Naive thymus-derived CD4-positive, alpha-beta T cell (primary cell): ENCODE measurements at regions of chr22 and their contacts with region 1.

Region 1: DNA sequence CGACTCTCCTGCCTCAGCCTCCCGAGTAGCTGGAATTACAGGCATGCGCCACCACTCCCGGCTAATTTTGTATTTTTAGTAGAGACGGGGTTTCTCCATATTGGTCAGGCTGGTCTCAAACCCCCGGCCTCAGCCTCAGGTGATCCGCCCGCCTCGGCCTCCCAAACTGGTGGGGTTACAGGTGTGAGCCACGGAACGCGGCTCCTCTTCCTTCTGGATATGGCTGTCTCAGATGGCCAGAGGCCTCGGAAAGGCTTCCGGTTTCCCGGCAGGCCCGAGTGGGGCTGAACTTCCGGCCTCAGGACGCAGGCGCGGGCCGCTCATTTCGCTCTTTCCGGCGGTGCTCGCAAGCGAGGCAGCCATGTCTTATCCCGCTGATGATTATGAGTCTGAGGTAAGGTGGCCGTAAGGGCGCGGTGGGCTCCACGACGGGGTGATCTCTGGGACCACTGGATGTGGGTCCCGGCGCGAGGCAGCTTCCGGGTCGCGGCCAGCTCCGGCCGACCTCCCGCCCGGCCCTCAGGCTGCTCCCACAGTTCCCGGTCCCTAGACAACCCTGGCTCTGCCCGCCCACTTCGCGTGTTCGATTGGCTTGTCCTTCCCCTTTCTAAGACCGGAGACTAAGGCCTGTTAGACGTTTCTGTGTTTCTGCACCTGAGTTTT is at the start of gene EIF3L:
- DNase-seq: peak; percentile 79 to 90 (median 84)
- ATAC-seq: peak; percentile 79
- H3K4me3 ChIP-seq: peak within 1 kb of the TSS; percentile 77
- H3K4me3 Mint-ChIP-seq: peak within 1 kb of the TSS; percentile 91 to 99 (median 95)
- H3K27ac ChIP-seq: peak within 1 kb of the TSS; percentile 79
- H3K27ac Mint-ChIP-seq: peak within 1 kb of the TSS; percentile 89 to 100 (median 98)
- H3K4me1 ChIP-seq: peaks cover 21 to 26% of the 10 kb centered on the region in 2 donors
- H3K4me1 Mint-ChIP-seq: peaks cover 26 to 60% (median 50%) of the 10 kb centered on the region in 7 donors
- H3K27me3 ChIP-seq: no peaks in the 10 kb centered on the region
- H3K27me3 Mint-ChIP-seq: no peaks in the 10 kb centered on the region
- total RNA-seq, gene EIF3L: 383 to 586 (median 525) TPM

Region 2: DNA sequence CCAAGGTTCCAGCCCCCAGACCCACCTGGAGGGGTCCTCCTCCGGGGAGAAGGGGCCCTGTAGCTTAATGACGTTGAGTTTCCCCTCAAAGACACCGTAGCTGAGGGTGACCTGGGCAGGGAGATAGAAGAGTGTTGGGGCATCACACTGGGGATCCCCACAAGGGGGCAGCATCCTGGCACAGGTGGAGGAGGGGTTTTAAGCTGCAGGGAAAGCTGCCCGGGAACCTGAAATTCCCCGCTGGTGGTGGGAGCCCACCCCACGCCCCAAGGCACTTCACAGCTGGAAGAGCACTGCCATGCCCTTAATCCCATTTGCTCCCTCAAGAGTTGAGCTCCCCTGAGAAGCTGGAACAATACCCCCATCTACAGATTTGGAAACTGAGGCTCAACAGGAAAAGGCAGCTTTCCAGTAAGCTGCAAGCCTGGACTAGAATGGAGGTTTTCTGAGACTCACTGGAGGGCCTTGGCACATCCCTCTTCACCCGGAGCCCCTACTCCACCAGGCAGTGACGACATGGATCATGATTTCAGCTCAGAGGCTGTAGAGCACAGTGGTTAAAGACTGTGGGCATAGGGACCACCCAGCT is 376.7 kb before region 1 on chr22:
- CTCF ChIA-PET with region 1: no interaction called
- POLR2A ChIA-PET with region 1: no interaction called
- intact Hi-C with region 1: no loop called
- DNase-seq: peak in 7 of 9 donors; percentile 34 to 54 (median 38)
- ATAC-seq: peak; percentile 60
- H3K4me3 ChIP-seq: no peak overlapping the region
- H3K4me3 Mint-ChIP-seq: no peak overlapping the region
- H3K27ac ChIP-seq: no peak overlapping the region
- H3K27ac Mint-ChIP-seq: peak overlapping the region in 5 of 9 donors; percentile 11 to 87 (median 51)
- H3K4me1 ChIP-seq: no peaks in the 10 kb centered on the region
- H3K4me1 Mint-ChIP-seq: peaks cover 13 to 24% (median 15%) of the 10 kb centered on the region in 7 donors
- H3K27me3 ChIP-seq: no peaks in the 10 kb centered on the region
- H3K27me3 Mint-ChIP-seq: no peaks in the 10 kb centered on the region

Region 3: GRCh38 chr22:37658133-37659065 is 190.8 kb before region 1 on chr22 and contains the start of gene PDXP:
- CTCF ChIA-PET with region 1: no interaction called
- POLR2A ChIA-PET with region 1: no interaction called
- intact Hi-C with region 1: loop called in 1 of 2 experiments (anchors 10 kb)
- DNase-seq: peak; percentile 95 to 99 (median 98)
- ATAC-seq: peak; percentile 96
- H3K4me3 ChIP-seq: peak within 1 kb of the TSS; percentile 60
- H3K4me3 Mint-ChIP-seq: peak within 1 kb of the TSS; percentile 85 to 95 (median 89)
- H3K27ac ChIP-seq: peak within 1 kb of the TSS; percentile 75
- H3K27ac Mint-ChIP-seq: peak within 1 kb of the TSS; percentile 82 to 98 (median 91)
- H3K4me1 ChIP-seq: peaks cover 23 to 26% of the 10 kb centered on the region in 2 donors
- H3K4me1 Mint-ChIP-seq: peaks cover 27 to 45% (median 41%) of the 10 kb centered on the region in 7 donors
- H3K27me3 ChIP-seq: no peaks in the 10 kb centered on the region
- H3K27me3 Mint-ChIP-seq: no peaks in the 10 kb centered on the region
- total RNA-seq, gene PDXP: 3.9 to 27.4 (median 7.5) TPM

Region 4: DNA sequence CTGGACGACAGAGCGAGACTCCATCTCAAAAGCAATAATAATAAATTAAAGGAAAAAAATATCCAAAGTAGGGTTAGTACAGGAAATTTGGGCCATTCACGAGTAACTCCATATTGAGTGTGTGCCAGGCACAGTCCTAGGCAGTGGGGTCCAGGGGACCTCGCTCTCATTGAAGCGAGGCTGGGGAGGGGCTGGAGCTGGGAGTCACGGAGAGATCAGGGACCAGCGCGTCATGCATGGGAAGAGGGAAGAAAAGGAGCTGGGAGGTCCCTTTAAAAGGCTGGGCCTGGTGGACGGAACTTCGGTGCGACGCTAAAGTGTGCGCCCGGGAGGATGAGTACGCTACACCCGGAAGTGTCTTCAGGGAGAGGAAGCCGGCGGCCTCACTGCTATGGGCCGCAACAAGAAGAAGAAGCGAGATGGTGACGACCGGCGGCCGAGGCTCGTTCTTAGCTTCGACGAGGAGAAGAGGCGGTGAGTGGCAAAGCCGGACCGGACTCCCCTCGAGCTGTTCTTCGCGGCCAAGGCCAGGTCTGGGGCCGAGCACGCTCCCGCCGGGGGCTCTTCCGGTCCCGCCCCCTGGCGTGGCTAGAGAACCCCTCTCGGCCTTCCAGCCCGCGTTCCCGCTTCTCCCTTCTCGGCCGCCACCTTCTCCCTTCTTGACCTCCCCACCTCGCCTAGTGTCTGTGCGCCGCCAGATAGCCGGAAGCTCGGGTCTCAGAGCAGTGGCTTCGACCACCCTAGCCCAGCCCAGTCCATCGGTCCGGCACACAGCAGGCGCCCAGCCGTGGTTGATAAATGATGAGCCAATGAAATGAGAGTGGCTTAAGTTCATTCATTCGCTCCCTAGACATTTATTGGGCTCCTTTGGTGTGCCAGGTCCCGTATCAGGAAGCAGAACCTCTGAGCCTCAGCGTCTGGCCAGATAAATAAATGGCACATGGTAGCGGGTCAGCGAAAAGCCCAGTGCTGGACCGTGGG is 162.9 kb before region 1 on chr22 and contains the start of gene NOL12:
- CTCF ChIA-PET with region 1: no interaction called
- POLR2A ChIA-PET with region 1: interaction called, 4 read pairs
- intact Hi-C with region 1: loop called in 1 of 2 experiments (anchors 1 kb)
- DNase-seq: peak; percentile 63 to 82 (median 78)
- ATAC-seq: peak; percentile 91
- H3K4me3 ChIP-seq: peak within 1 kb of the TSS; percentile 82
- H3K4me3 Mint-ChIP-seq: peak within 1 kb of the TSS; percentile 93 to 98 (median 96)
- H3K27ac ChIP-seq: peak within 1 kb of the TSS; percentile 84
- H3K27ac Mint-ChIP-seq: peak within 1 kb of the TSS; percentile 88 to 99 (median 95)
- H3K4me1 ChIP-seq: peaks cover 18 to 22% of the 10 kb centered on the region in 2 donors
- H3K4me1 Mint-ChIP-seq: peaks cover 16 to 39% (median 33%) of the 10 kb centered on the region in 7 donors
- H3K27me3 ChIP-seq: no peaks in the 10 kb centered on the region
- H3K27me3 Mint-ChIP-seq: no peaks in the 10 kb centered on the region
- total RNA-seq, gene NOL12: 32.8 to 52.5 (median 45.3) TPM

Region 5: DNA sequence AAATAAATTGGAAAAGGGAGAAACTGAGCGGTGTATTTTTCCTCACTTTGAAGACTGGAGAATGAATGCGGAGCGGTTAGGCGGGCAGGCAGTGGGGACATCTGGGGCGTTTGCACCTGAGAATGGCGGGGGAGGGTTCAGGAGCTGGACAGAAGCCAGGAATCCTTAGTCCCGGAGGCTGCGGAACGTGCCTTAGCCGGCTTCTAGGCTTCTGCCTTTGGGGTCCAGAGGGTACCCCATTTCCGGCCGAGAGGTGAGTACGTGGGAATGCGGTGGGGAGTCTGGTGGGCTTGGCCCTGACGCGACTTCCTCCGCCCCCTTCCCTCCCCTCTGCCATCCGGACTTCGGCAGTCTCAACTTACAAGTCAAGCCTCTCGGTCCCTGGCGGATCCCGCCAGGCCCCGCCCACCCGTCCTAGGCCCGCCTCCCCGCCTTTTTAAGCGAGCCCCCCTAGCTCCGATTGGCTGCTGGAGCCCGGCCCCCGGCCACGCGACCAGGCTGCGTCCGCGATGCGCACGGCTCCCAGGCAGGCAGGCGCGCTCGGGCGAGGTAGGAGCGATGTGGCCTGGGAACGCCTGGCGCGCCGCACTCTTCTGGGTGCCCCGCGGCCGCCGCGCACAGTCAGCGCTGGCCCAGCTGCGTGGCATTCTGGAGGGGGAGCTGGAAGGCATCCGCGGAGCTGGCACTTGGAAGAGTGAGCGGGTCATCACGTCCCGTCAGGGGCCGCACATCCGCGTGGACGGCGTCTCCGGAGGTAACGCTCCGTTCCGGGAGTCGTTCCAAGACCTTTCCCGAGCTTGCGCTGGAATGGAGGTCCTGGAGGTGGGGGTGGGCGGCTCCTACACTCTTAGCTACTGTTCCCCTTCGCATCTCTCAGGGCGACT is 41.6 kb before region 1 on chr22 and contains the start of gene GCAT:
- CTCF ChIA-PET with region 1: no interaction called
- POLR2A ChIA-PET with region 1: interaction called, 4 read pairs
- intact Hi-C with region 1: loop called (anchors 1 to 5 kb)
- DNase-seq: peak; percentile 61 to 92 (median 71)
- ATAC-seq: peak; percentile 94
- H3K4me3 ChIP-seq: peak within 1 kb of the TSS; percentile 58
- H3K4me3 Mint-ChIP-seq: peak within 1 kb of the TSS; percentile 67 to 90 (median 80)
- H3K27ac ChIP-seq: peak within 1 kb of the TSS; percentile 44
- H3K27ac Mint-ChIP-seq: peak within 1 kb of the TSS in 6 of 9 donors; percentile 8 to 65 (median 44)
- H3K4me1 ChIP-seq: peaks cover 14 to 30% of the 10 kb centered on the region in 2 donors
- H3K4me1 Mint-ChIP-seq: peaks cover 15 to 51% (median 43%) of the 10 kb centered on the region in 7 donors
- H3K27me3 ChIP-seq: peaks cover 0 to 25% of the 10 kb centered on the region in 2 donors
- H3K27me3 Mint-ChIP-seq: peaks cover 4 to 38% (median 23%) of the 10 kb centered on the region in 5 donors
- total RNA-seq, gene GCAT: 1.1 to 14.6 (median 5.4) TPM

Region 6: GRCh38 chr22:37862570-37863325 is 13.5 kb after region 1 on chr22:
- CTCF ChIA-PET with region 1: interaction called, 18 read pairs
- POLR2A ChIA-PET with region 1: interaction called, 5 read pairs
- intact Hi-C with region 1: loop called (anchors 1 kb)
- DNase-seq: no peak
- ATAC-seq: no peak
- H3K4me3 ChIP-seq: no peak overlapping the region
- H3K4me3 Mint-ChIP-seq: no peak overlapping the region
- H3K27ac ChIP-seq: no peak overlapping the region
- H3K27ac Mint-ChIP-seq: peak overlapping the region in 3 of 9 donors; percentile 13 to 82 (median 76)
- H3K4me1 ChIP-seq: peaks cover 0 to 2% of the 10 kb centered on the region in 2 donors
- H3K4me1 Mint-ChIP-seq: peaks cover 5 to 10% (median 6%) of the 10 kb centered on the region in 7 donors
- H3K27me3 ChIP-seq: no peaks in the 10 kb centered on the region
- H3K27me3 Mint-ChIP-seq: no peaks in the 10 kb centered on the region

Region 7: GRCh38 chr22:37920126-37920525 is 70.9 kb after region 1 on chr22:
- CTCF ChIA-PET with region 1: no interaction called
- POLR2A ChIA-PET with region 1: no interaction called
- intact Hi-C with region 1: no loop called
- DNase-seq: no peak
- ATAC-seq: no peak
- H3K4me3 ChIP-seq: no peak overlapping the region
- H3K4me3 Mint-ChIP-seq: peak overlapping the region in 8 of 10 donors; percentile 33 to 72 (median 64)
- H3K27ac ChIP-seq: peak overlapping the region; percentile 7
- H3K27ac Mint-ChIP-seq: peak overlapping the region; percentile 54 to 93 (median 86)
- H3K4me1 ChIP-seq: no peaks in the 10 kb centered on the region
- H3K4me1 Mint-ChIP-seq: peaks cover 0 to 7% (median 6%) of the 10 kb centered on the region in 7 donors
- H3K27me3 ChIP-seq: no peaks in the 10 kb centered on the region
- H3K27me3 Mint-ChIP-seq: no peaks in the 10 kb centered on the region

Region 8: DNA sequence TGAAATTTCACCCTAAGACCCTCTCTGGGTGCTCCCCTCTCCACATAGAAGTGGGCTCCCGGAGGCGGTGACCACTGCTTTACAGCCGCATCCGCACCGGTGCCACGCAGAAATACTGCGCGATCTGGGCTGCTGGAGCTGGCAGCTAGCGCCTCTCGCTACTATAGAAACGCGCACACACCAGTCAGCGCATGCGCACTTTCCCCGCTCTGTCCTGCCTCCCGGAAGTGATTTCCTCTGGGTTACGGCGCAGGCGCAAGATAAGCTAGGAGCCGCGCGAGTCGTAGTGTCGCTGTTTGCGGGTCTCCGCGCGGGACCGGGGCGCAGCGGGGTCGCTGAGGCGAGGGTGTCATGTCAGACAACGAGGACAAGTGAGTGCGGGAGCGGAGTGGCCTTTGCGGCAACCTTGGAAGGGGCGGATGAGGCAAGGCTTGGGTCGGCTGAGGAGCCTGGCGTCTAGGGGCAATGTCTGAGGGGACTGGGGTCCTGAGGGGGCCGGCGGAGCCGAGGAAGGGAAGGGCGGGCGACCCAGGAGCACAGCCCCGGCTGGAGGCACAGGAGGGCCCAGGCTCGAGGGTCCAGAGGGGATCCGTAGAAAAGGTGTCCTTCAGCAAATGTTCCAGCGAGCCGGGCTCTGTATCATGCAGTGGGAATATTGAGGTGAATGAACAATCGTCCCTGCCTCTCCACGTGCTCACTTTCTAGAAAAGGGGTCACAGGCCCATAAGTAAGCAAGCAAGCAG is 104.4 kb after region 1 on chr22 and contains the starts of genes C22orf23 and POLR2F:
- CTCF ChIA-PET with region 1: no interaction called
- POLR2A ChIA-PET with region 1: interaction called, 3 read pairs
- intact Hi-C with region 1: loop called in 1 of 2 experiments (anchors 1 kb)
- DNase-seq: peak; percentile 92 to 96 (median 94)
- ATAC-seq: peak; percentile 97
- H3K4me3 ChIP-seq: peak within 1 kb of the TSS; percentile 96
- H3K4me3 Mint-ChIP-seq: peak within 1 kb of the TSS; percentile 93 to 100 (median 99)
- H3K27ac ChIP-seq: peak within 1 kb of the TSS; percentile 75
- H3K27ac Mint-ChIP-seq: peak within 1 kb of the TSS; percentile 93 to 99 (median 95)
- H3K4me1 ChIP-seq: peaks cover 13 to 18% of the 10 kb centered on the region in 2 donors
- H3K4me1 Mint-ChIP-seq: peaks cover 27 to 54% (median 51%) of the 10 kb centered on the region in 7 donors
- H3K27me3 ChIP-seq: no peaks in the 10 kb centered on the region
- H3K27me3 Mint-ChIP-seq: peaks cover 4 to 20% (median 14%) of the 10 kb centered on the region in 5 donors
- total RNA-seq, gene C22orf23: 0.31 TPM in 1 of 5 experiments, not detected in the others
- total RNA-seq, gene POLR2F: 25.9 to 67.8 (median 43.9) TPM